ENCODE measurements at regions of chr20 and their contacts with region 1.

Region 1: GRCh38 chr20:4108495-4109306 is 93.3 kb upstream of the RNF24 start:
- DNase-seq: peak; percentile 81
- CTCF ChIP-seq: peak; percentile 95

Region 2: GRCh38 chr20:3980260-3981131 is 128.2 kb before region 1 on chr20:
- CTCF ChIA-PET with region 1: no interaction called
- POLR2A ChIA-PET with region 1: no interaction called
- DNase-seq: peak; percentile 34
- CTCF ChIP-seq: no peak

Region 3: DNA sequence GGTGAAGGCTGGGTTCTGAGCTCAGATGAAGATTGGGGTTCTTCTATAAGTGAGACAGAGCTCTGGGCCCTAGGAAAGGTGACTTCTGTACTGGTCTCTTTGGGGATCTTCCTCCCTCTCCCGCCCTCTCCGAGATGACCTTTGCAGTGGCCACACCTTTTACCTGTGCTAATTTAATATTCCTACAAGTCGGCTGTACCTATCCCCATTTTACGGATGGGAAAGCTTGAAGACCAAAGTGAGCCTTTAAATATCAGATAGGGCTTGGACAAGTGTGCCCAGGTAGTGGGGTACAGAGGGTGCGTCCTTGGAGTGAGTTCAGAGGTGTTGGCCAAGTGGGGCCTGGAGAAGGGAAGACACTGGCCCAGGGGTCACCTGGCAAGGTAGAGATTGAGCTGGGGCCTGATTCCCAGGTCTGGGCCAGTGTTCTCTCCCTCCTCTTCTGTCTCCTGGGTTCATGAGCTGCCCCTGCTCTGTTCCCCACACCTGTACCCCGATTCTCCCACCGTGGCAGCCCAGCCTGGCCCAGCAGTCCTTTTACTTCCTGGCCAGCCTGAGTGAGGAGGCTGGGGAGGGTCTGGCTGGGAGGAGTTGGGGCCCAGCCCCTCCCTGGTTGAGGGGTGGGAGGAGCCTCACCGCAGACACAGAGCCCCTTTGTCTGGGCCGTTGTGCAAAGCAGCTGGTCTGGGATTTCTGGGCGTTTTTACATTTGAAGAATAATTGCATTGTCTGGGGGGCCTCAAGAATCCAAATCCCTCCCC is 58.7 kb after region 1 on chr20:
- CTCF ChIA-PET with region 1: interaction called, 14 read pairs
- POLR2A ChIA-PET with region 1: no interaction called
- DNase-seq: no peak
- CTCF ChIP-seq: no peak

Region 4: DNA sequence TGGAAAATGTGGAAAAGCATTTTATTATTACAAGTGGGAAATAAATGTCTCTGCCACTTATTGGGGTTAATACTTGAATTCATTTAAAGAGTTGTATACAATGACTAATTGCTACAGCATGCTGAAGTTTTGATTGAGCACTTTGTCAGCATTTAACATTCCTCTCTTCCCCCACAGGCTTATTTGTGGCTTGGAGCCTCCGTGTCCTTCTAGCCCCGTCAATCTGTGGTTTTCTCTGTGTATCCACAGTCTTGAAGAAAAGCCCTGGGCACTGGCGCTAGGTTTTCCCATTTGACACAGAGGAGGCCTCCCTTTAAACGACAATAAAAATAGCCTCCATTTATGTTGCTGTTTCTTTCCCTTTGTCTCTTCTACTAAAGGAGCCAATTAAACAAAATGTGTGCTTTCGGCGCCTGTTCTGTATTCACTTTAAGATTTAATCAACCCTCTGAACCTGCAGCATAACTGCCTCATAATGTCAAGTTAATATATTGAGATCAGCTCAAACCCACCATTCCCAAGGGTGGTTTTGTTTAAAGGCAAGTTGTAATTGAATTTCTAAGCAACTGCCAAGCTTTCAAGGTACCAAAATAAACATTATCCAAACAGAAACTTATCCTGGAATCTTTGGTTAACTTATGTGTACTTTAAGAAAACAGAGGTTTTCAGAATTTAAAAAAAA is 233.2 kb after region 1 on chr20:
- CTCF ChIA-PET with region 1: no interaction called
- POLR2A ChIA-PET with region 1: no interaction called
- DNase-seq: no peak
- CTCF ChIP-seq: no peak

Region 5: GRCh38 chr20:4592316-4593148 is 483.8 kb after region 1 on chr20:
- CTCF ChIA-PET with region 1: interaction called, 10 read pairs
- POLR2A ChIA-PET with region 1: no interaction called
- DNase-seq: peak; percentile 81
- CTCF ChIP-seq: peak; percentile 82

Measured in GM10248 (cell line).